CD8-positive, alpha-beta memory T cell (primary cell): ENCODE measurements at regions of chr10 and their contacts with region 1.

Region 1: GRCh38 chr10:123008439-123009205 is at the starts of genes ACADSB and IKZF5:
- DNase-seq: peak; percentile 94 to 99 (median 95)
- H3K4me3 ChIP-seq: peak within 1 kb of the TSS; percentile 92
- H3K4me3 Mint-ChIP-seq: peak within 1 kb of the TSS; percentile 95 to 100 (median 99)
- H3K27ac ChIP-seq: peak within 1 kb of the TSS; percentile 96
- H3K27ac Mint-ChIP-seq: peak within 1 kb of the TSS; percentile 92 to 100 (median 99)
- H3K4me1 ChIP-seq: peaks cover 56% of the 10 kb centered on the region
- H3K4me1 Mint-ChIP-seq: peaks cover 56 to 75% (median 67%) of the 10 kb centered on the region in 3 donors
- H3K27me3 ChIP-seq: no peaks in the 10 kb centered on the region
- H3K27me3 Mint-ChIP-seq: no peaks in the 10 kb centered on the region
- total RNA-seq, gene ACADSB: 24.4 to 27.3 TPM
- total RNA-seq, gene IKZF5: 20.3 to 23.9 TPM

Region 2: GRCh38 chr10:122953827-122954730 is 54.5 kb before region 1 on chr10 and contains the start of gene C10orf88:
- CTCF ChIA-PET with region 1: interaction called, 4 read pairs
- POLR2A ChIA-PET with region 1: interaction called, 17 read pairs
- DNase-seq: peak; percentile 94 to 99 (median 96)
- H3K4me3 ChIP-seq: peak within 1 kb of the TSS; percentile 62
- H3K4me3 Mint-ChIP-seq: peak within 1 kb of the TSS; percentile 85 to 93 (median 91)
- H3K27ac ChIP-seq: peak within 1 kb of the TSS; percentile 8
- H3K27ac Mint-ChIP-seq: peak within 1 kb of the TSS; percentile 52 to 93 (median 84)
- H3K4me1 ChIP-seq: peaks cover 19% of the 10 kb centered on the region
- H3K4me1 Mint-ChIP-seq: peaks cover 28 to 54% (median 32%) of the 10 kb centered on the region in 3 donors
- H3K27me3 ChIP-seq: no peaks in the 10 kb centered on the region
- H3K27me3 Mint-ChIP-seq: peaks cover 0 to 2% of the 10 kb centered on the region in 2 donors
- total RNA-seq, gene C10orf88: 8.5 to 11.4 TPM

Region 3: DNA sequence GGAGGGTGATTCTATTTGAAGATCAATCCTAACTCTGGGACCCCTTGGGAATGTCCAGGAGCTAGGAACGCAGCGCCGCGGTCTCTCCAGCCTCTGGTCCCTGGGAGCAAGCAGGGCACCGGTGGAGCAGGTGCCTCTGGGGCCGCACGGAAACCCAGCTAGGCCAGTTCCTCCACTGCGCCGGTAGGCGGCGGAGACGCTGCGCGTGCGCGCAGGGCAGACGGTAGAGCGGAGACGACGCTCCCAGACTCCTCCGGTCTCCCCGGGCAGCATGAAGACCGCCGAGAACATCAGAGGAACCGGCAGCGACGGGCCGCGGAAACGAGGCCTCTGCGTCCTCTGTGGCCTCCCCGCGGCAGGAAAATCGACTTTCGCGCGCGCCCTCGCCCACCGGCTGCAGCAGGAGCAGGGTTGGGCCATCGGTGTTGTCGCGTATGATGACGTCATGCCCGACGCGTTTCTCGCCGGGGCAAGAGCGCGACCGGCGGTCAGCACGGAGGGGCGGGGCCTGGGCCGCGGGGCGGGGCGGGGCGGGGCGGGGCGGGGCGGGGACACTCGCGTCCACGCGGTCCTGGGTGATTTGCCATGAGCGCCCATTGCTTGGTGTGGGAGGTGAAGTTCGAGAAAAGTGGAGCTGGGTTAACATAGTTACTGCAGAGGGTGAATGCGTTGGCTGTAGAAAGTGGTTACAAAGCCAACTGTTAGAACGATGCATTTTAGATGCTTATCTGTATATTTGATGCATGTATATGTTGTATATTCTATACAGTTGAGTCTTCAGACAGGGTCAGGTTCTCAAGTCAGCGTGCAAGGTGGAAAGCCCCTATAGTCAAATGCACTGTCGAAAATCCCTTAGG is 28.2 kb before region 1 on chr10 and contains the start of gene PSTK:
- CTCF ChIA-PET with region 1: interaction called, 39 read pairs
- POLR2A ChIA-PET with region 1: interaction called, 29 read pairs
- DNase-seq: peak; percentile 83 to 91 (median 88)
- H3K4me3 ChIP-seq: peak within 1 kb of the TSS; percentile 72
- H3K4me3 Mint-ChIP-seq: peak within 1 kb of the TSS; percentile 85 to 95 (median 90)
- H3K27ac ChIP-seq: peak within 1 kb of the TSS; percentile 91
- H3K27ac Mint-ChIP-seq: peak within 1 kb of the TSS; percentile 89 to 98 (median 96)
- H3K4me1 ChIP-seq: peaks cover 11% of the 10 kb centered on the region
- H3K4me1 Mint-ChIP-seq: peaks cover 12 to 25% (median 23%) of the 10 kb centered on the region in 3 donors
- H3K27me3 ChIP-seq: no peaks in the 10 kb centered on the region
- H3K27me3 Mint-ChIP-seq: peaks cover 0 to 4% of the 10 kb centered on the region in 2 donors
- total RNA-seq, gene PSTK: 5.8 TPM